Activated T-helper 2 cell treated with anti-CD3 and anti-CD28 coated beads, Interferon-gamma antibody, Interleukin-2, Interleukin-4, amounts not matched to agents 10 μg/mL and 5 μg/mL and 100 μg/mL, durations not matched to agents 14 hours and 24 hours and 36 hours (primary cell): ENCODE measurements at regions of chr20 and their contacts with region 1.

Region 1: DNA sequence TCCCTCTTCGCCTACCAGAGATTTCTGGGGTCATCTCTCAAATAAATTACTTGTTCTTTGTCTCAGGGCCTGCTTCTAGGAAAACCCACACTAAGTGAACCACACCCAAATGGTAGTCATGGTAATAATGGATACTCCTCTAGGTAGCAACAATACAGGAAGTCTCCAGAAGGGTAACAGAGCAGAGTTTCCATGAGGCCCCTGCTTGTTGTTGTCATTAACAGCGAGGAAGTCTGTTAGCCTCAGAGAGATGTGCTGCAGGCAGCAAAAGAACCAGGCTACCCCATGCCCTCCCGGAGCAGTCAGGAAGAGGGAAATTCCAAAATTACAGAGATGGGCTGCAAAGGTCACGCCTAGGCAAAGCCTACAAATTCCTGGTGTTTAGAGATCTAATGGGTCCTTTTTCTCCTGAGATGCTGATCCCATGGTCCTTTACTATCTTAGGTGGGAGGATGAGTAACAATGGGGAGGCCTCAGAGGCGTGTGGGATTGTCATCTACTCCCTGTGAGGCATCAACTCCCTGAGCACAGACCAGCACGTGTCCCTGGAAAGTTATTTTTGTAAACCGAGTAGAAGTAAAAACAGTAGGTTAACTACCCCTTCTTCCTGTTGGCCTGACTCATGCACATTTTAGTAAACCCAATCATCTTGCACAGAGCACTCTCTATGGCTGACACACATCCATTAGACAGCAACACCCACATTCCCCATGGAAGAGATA is 10.1 kb downstream of the ISM1 start:
- DNase-seq: peak; percentile 68
- H3K4me3 Mint-ChIP-seq: peak overlapping the region; percentile 40
- H3K27ac Mint-ChIP-seq: peak overlapping the region; percentile 94
- H3K4me1 Mint-ChIP-seq: peaks cover 40% of the 10 kb centered on the region
- H3K27me3 Mint-ChIP-seq: peaks cover 2% of the 10 kb centered on the region

Region 2: GRCh38 chr20:13183005-13183404 is 48.2 kb before region 1 on chr20:
- intact Hi-C with region 1: no loop called
- DNase-seq: no peak
- H3K4me3 Mint-ChIP-seq: no peak overlapping the region
- H3K27ac Mint-ChIP-seq: no peak overlapping the region
- H3K4me1 Mint-ChIP-seq: peaks cover 14% of the 10 kb centered on the region
- H3K27me3 Mint-ChIP-seq: no peaks in the 10 kb centered on the region

Region 3: DNA sequence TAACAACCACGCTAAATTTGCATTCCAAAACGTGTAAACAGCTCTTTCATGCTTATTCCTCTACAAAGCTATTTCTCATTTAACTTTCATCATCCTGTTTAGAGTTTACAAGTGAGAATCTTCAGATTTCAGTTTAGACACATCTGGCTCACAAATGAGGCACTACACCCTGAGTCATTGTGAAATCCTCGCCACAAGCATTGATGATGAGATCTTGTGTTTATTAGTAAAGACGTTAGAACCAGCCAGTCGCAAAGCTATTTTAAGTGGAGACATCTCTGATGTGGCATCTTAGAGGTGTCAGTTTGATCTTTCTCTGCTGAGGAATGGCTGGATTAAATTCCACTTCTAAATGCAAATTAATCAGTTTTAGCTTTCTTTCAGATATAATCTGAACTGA is 18.4 kb before region 1 on chr20:
- intact Hi-C with region 1: loop called (anchors 1 kb)
- DNase-seq: peak; percentile 26
- H3K4me3 Mint-ChIP-seq: no peak overlapping the region
- H3K27ac Mint-ChIP-seq: peak overlapping the region; percentile 29
- H3K4me1 Mint-ChIP-seq: peaks cover 30% of the 10 kb centered on the region
- H3K27me3 Mint-ChIP-seq: peaks cover 37% of the 10 kb centered on the region

Region 4: DNA sequence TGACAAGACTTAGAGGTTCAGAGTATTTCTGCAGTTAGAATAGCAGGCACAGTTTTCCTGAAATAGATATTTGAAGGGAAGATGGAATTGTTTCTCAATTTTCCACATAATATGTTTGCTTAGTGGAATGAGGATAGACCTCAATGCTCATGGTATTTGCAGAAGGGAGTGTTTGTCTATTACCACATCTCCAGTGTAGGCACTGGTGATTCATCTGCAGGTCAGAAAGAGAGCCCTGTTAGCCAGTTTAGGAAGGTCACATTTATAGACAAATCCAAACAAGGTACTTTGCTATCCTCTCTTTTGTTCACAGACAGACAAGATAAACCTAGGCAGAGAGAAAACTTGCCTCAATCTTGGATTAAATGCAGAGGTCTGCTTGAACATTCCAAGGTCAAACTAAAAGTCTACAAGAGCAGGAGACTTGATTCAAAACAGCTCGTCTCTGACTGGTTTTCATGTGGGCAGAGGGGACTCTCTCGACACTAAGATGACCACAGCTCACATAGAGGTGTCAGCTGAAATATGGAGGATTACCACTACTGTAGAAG is 12.7 kb after region 1 on chr20:
- intact Hi-C with region 1: loop called (anchors 1 kb)
- DNase-seq: no peak
- H3K4me3 Mint-ChIP-seq: no peak overlapping the region
- H3K27ac Mint-ChIP-seq: no peak overlapping the region
- H3K4me1 Mint-ChIP-seq: peaks cover 36% of the 10 kb centered on the region
- H3K27me3 Mint-ChIP-seq: no peaks in the 10 kb centered on the region

Region 5: GRCh38 chr20:13261460-13262301 is 30.5 kb after region 1 on chr20:
- intact Hi-C with region 1: loop called (anchors 1 kb)
- DNase-seq: peak; percentile 47
- H3K4me3 Mint-ChIP-seq: no peak overlapping the region
- H3K27ac Mint-ChIP-seq: no peak overlapping the region
- H3K4me1 Mint-ChIP-seq: peaks cover 11% of the 10 kb centered on the region
- H3K27me3 Mint-ChIP-seq: no peaks in the 10 kb centered on the region

Region 6: GRCh38 chr20:13312300-13312699 is 81.1 kb after region 1 on chr20:
- intact Hi-C with region 1: loop called (anchors 1 kb)
- DNase-seq: no peak
- H3K4me3 Mint-ChIP-seq: no peak overlapping the region
- H3K27ac Mint-ChIP-seq: peak overlapping the region; percentile 23
- H3K4me1 Mint-ChIP-seq: peaks cover 20% of the 10 kb centered on the region
- H3K27me3 Mint-ChIP-seq: peaks cover 2% of the 10 kb centered on the region

Region 7: GRCh38 chr20:13333793-13334192 is 102.6 kb after region 1 on chr20:
- intact Hi-C with region 1: loop called (anchors 5 kb)
- DNase-seq: no peak
- H3K4me3 Mint-ChIP-seq: no peak overlapping the region
- H3K27ac Mint-ChIP-seq: no peak overlapping the region
- H3K4me1 Mint-ChIP-seq: peaks cover 53% of the 10 kb centered on the region
- H3K27me3 Mint-ChIP-seq: no peaks in the 10 kb centered on the region